GM12878 (cell line): ENCODE measurements at regions of chr12 and their contacts with region 1.

Region 1: DNA sequence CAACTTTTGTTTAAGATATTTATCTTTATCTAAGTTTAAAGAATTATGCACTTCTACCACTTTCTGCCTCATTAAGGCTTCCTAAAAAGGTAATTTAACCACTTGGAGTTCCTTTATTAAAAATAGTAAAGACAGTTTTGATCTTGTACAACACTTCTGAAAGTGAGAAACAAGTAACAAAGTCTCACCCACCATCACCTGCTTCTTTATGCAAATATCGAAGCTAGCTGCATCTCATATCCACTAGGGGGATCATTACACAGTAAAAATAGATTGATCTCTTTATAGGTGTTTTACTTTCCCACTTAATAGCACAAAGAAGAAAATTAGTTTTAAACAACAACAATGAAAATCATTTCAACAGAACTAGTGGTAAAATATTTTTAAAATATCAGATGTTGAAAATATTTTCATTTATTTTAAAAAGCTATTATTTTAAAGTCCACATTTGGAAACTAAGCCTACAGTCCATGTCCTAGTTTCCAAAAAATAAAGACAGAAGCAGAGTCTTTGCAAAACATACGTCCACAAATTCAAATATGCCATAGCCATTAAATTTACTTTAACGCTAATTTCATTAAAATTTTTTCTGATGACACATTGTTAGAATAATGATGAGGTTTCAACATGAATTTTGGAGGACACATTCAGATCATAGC is 160.0 kb upstream of the SOX5 start:
- DNase-seq: peak; percentile 37
- ATAC-seq: peak; percentile 95
- H3K4me3 ChIP-seq: no peak overlapping the region
- H3K27ac ChIP-seq: no peak overlapping the region
- H3K4me1 ChIP-seq: no peaks in the 10 kb centered on the region
- H3K27me3 ChIP-seq: no peaks in the 10 kb centered on the region
- CTCF ChIP-seq: peak; percentile 47 to 70 (median 59)
- EP300 ChIP-seq: peak; percentile 34 to 51; a peak in 1 of 4 replicates
- POLR2A ChIP-seq: no peak
- RAD21 ChIP-seq: peak; percentile 71

Region 2: DNA sequence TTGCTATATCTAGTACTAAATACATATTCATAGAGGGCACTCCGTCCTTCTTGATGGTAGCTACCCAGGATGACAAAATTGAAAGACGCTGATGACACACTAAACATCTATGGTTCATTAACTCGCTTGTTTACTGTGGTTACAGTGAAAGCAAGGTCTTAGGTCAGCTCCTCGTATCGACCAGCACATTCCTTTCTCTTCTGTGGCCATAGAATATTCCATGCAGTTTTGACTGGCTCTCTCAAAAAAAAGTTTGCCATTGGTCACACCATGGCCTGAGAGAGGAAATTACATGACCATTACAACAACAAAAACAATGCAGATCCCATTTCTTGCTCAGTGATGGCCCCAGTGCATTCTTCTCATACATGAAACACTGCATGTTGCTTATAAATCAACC is 251.4 kb after region 1 on chr12:
- CTCF ChIA-PET with region 1: no interaction called
- POLR2A ChIA-PET with region 1: interaction called, 3 read pairs
- RAD21 ChIA-PET with region 1: interaction called, 3 read pairs
- SMC1A ChIA-PET with region 1: no interaction called
- in situ Hi-C with region 1: no loop called
- intact Hi-C with region 1: loop called (anchors 10 kb)
- DNase-seq: peak; percentile 30
- ATAC-seq: peak; percentile 90
- H3K4me3 ChIP-seq: no peak overlapping the region
- H3K27ac ChIP-seq: no peak overlapping the region
- H3K4me1 ChIP-seq: peaks cover 7% of the 10 kb centered on the region; the same call in 1 of the 2 replicates
- H3K27me3 ChIP-seq: peaks cover 0 to 3% of the 10 kb centered on the region in 2 experiments; a peak in 2 of 4 replicates
- CTCF ChIP-seq: no peak
- EP300 ChIP-seq: peak in 1 of 2 experiments; percentile 10; a peak in 1 of 4 replicates
- POLR2A ChIP-seq: no peak
- RAD21 ChIP-seq: no peak

Region 3: GRCh38 chr12:24596768-24597388 is 487.4 kb after region 1 on chr12:
- CTCF ChIA-PET with region 1: no interaction called
- POLR2A ChIA-PET with region 1: no interaction called
- RAD21 ChIA-PET with region 1: interaction called, 5 read pairs
- SMC1A ChIA-PET with region 1: interaction called, 3 read pairs
- in situ Hi-C with region 1: no loop called
- intact Hi-C with region 1: loop called (anchors 2 kb)
- DNase-seq: no peak
- ATAC-seq: peak; percentile 42; the same call in 1 of the 3 replicates
- H3K4me3 ChIP-seq: no peak overlapping the region
- H3K27ac ChIP-seq: no peak overlapping the region
- H3K4me1 ChIP-seq: no peaks in the 10 kb centered on the region
- H3K27me3 ChIP-seq: no peaks in the 10 kb centered on the region
- CTCF ChIP-seq: peak; percentile 53 to 55 (median 55)
- EP300 ChIP-seq: no peak
- POLR2A ChIP-seq: no peak
- RAD21 ChIP-seq: peak; percentile 55

Region 4: DNA sequence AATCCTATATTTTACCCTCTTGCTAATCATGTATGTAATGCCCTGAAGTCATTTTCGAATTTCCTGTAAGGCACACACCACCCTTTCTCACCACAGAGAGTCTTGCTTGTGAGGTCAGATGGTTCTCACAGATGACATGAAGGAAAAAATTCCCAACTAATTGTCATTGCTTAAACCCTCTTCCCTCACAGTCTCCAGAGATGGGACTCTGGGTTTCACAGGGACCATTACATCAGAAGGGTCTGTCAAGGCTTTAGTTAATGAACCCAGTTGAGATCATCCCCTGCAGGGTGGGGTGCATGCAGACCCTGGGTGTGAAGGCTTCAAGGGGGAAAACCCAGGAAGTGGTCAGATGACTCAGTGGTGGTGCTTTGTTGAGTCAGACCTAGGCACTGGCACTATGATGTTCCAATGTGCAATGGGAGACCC is 609.8 kb after region 1 on chr12:
- CTCF ChIA-PET with region 1: no interaction called
- POLR2A ChIA-PET with region 1: no interaction called
- RAD21 ChIA-PET with region 1: no interaction called
- SMC1A ChIA-PET with region 1: no interaction called
- in situ Hi-C with region 1: no loop called
- intact Hi-C with region 1: loop called (anchors 5 kb)
- DNase-seq: no peak
- ATAC-seq: peak; percentile 93
- H3K4me3 ChIP-seq: no peak overlapping the region
- H3K27ac ChIP-seq: no peak overlapping the region
- H3K4me1 ChIP-seq: peaks cover 11% of the 10 kb centered on the region
- H3K27me3 ChIP-seq: no peaks in the 10 kb centered on the region
- CTCF ChIP-seq: no peak
- EP300 ChIP-seq: no peak
- POLR2A ChIP-seq: no peak
- RAD21 ChIP-seq: no peak